ENCODE measurements at regions of chr7 and their contacts with region 1.

Region 1: DNA sequence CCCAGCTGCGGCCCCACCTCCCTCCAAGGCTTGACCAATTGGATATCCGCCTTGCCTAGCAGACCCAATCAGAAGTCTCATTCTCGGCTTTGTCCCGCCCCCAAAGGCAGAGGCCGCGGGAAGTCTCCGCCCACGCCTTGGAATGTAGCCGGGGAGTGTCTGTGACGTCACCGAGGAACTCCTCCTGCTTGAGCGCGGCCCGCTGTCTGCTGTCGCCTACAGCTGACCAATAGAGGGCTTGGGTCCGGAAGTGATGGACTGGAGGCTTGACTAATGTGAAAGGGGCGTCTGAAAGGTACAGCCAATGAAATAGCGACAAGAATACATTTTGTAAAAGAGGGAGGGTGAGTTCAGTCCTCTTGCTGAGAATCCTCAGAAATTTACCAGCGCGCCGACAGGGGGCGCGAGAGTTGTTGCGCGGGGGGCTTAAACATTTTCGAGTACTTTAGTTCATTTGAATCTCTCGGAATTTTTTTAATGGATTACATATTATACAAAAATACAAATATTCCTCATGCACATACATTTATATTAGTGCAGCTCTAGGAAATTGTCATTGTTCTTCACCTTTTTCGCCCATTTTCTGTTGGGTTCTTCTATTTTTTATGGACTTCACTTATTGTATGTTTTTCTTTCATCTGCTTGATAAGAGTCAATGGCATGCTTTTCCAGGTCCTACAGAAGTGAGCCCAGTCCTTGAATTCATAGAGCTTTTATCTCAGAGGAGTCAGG is 376 bp upstream of the CREB3L2 start:
- DNase-seq: peak; percentile 99
- ATAC-seq: peak; percentile 91
- H3K4me3 ChIP-seq: peak overlapping the region; percentile 66 to 99 (median 95)
- H3K4me3 Mint-ChIP-seq: peak overlapping the region; percentile 94
- H3K27ac ChIP-seq: peak overlapping the region; percentile 69 to 84
- H3K27ac Mint-ChIP-seq: peak overlapping the region; percentile 90
- H3K4me1 ChIP-seq: peaks cover 14 to 22% of the 10 kb centered on the region in 2 donors
- H3K4me1 Mint-ChIP-seq: peaks cover 30% of the 10 kb centered on the region
- H3K27me3 ChIP-seq: no peaks in the 10 kb centered on the region
- H3K27me3 Mint-ChIP-seq: no peaks in the 10 kb centered on the region
- CTCF ChIP-seq: peak; percentile 98

Region 2: DNA sequence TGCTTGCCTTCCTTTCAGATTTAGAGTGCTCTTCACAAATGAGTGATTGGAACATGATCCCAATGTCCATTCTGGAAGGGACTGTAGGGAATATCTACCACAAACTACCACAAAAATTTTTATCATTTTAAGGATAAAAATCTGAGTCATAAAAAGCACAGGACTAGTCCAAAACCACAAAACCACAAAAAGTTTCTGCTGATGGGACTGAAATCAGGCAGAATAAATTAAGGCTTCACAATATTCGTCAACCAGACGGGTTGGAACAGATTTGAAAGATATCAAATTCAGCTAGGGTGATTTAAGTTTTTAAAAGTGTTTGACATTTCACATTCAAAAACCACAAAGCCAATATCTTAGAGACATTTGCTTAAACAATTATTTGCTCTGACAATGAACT is 558.6 kb before region 1 on chr7:
- CTCF ChIA-PET with region 1: no interaction called
- POLR2A ChIA-PET with region 1: no interaction called
- intact Hi-C with region 1: no loop called
- DNase-seq: no peak
- ATAC-seq: no peak
- H3K4me3 ChIP-seq: no peak overlapping the region
- H3K4me3 Mint-ChIP-seq: no peak overlapping the region
- H3K27ac ChIP-seq: no peak overlapping the region
- H3K27ac Mint-ChIP-seq: no peak overlapping the region
- H3K4me1 ChIP-seq: no peaks in the 10 kb centered on the region
- H3K4me1 Mint-ChIP-seq: no peaks in the 10 kb centered on the region
- H3K27me3 ChIP-seq: no peaks in the 10 kb centered on the region
- H3K27me3 Mint-ChIP-seq: no peaks in the 10 kb centered on the region
- CTCF ChIP-seq: no peak

Region 3: GRCh38 chr7:137934941-137935883 is 67.0 kb before region 1 on chr7:
- CTCF ChIA-PET with region 1: no interaction called
- POLR2A ChIA-PET with region 1: interaction called, 9 read pairs
- intact Hi-C with region 1: loop called (anchors 1 kb)
- DNase-seq: peak; percentile 51
- ATAC-seq: peak; percentile 41
- H3K4me3 ChIP-seq: peak overlapping the region in 4 of 5 experiments; percentile 40 to 68 (median 54)
- H3K4me3 Mint-ChIP-seq: peak overlapping the region; percentile 85
- H3K27ac ChIP-seq: peak overlapping the region; percentile 54 to 90
- H3K27ac Mint-ChIP-seq: peak overlapping the region; percentile 92
- H3K4me1 ChIP-seq: peaks cover 28 to 30% of the 10 kb centered on the region in 2 donors
- H3K4me1 Mint-ChIP-seq: peaks cover 36% of the 10 kb centered on the region
- H3K27me3 ChIP-seq: no peaks in the 10 kb centered on the region
- H3K27me3 Mint-ChIP-seq: no peaks in the 10 kb centered on the region
- CTCF ChIP-seq: no peak

Region 4: GRCh38 chr7:137985253-137985896 is 16.9 kb before region 1 on chr7:
- CTCF ChIA-PET with region 1: interaction called, 44 read pairs
- POLR2A ChIA-PET with region 1: no interaction called
- intact Hi-C with region 1: loop called (anchors 2 kb)
- DNase-seq: peak; percentile 71
- ATAC-seq: peak; percentile 73
- H3K4me3 ChIP-seq: peak overlapping the region in 1 of 5 experiments; percentile 31
- H3K4me3 Mint-ChIP-seq: peak overlapping the region; percentile 58
- H3K27ac ChIP-seq: peak overlapping the region; percentile 89 to 94
- H3K27ac Mint-ChIP-seq: no peak overlapping the region
- H3K4me1 ChIP-seq: peaks cover 75 to 84% of the 10 kb centered on the region in 2 donors
- H3K4me1 Mint-ChIP-seq: peaks cover 30% of the 10 kb centered on the region
- H3K27me3 ChIP-seq: no peaks in the 10 kb centered on the region
- H3K27me3 Mint-ChIP-seq: no peaks in the 10 kb centered on the region
- CTCF ChIP-seq: no peak

Region 5: GRCh38 chr7:138049505-138050116 is 47.3 kb after region 1 on chr7:
- CTCF ChIA-PET with region 1: no interaction called
- POLR2A ChIA-PET with region 1: no interaction called
- intact Hi-C with region 1: no loop called
- DNase-seq: no peak
- ATAC-seq: no peak
- H3K4me3 ChIP-seq: no peak overlapping the region
- H3K4me3 Mint-ChIP-seq: no peak overlapping the region
- H3K27ac ChIP-seq: no peak overlapping the region
- H3K27ac Mint-ChIP-seq: no peak overlapping the region
- H3K4me1 ChIP-seq: no peaks in the 10 kb centered on the region
- H3K4me1 Mint-ChIP-seq: no peaks in the 10 kb centered on the region
- H3K27me3 ChIP-seq: no peaks in the 10 kb centered on the region
- H3K27me3 Mint-ChIP-seq: peaks cover 12% of the 10 kb centered on the region
- CTCF ChIP-seq: no peak

Region 6: GRCh38 chr7:138459413-138460175 is 457.3 kb after region 1 on chr7:
- CTCF ChIA-PET with region 1: no interaction called
- POLR2A ChIA-PET with region 1: no interaction called
- intact Hi-C with region 1: loop called (anchors 1 kb)
- DNase-seq: peak; percentile 99
- ATAC-seq: peak; percentile 87
- H3K4me3 ChIP-seq: peak overlapping the region; percentile 40 to 73 (median 62)
- H3K4me3 Mint-ChIP-seq: peak overlapping the region; percentile 91
- H3K27ac ChIP-seq: peak overlapping the region in 1 of 2 donors; percentile 56
- H3K27ac Mint-ChIP-seq: peak overlapping the region; percentile 94
- H3K4me1 ChIP-seq: peaks cover 9 to 14% of the 10 kb centered on the region in 2 donors
- H3K4me1 Mint-ChIP-seq: peaks cover 19% of the 10 kb centered on the region
- H3K27me3 ChIP-seq: no peaks in the 10 kb centered on the region
- H3K27me3 Mint-ChIP-seq: peaks cover 3% of the 10 kb centered on the region
- CTCF ChIP-seq: no peak

Region 7: DNA sequence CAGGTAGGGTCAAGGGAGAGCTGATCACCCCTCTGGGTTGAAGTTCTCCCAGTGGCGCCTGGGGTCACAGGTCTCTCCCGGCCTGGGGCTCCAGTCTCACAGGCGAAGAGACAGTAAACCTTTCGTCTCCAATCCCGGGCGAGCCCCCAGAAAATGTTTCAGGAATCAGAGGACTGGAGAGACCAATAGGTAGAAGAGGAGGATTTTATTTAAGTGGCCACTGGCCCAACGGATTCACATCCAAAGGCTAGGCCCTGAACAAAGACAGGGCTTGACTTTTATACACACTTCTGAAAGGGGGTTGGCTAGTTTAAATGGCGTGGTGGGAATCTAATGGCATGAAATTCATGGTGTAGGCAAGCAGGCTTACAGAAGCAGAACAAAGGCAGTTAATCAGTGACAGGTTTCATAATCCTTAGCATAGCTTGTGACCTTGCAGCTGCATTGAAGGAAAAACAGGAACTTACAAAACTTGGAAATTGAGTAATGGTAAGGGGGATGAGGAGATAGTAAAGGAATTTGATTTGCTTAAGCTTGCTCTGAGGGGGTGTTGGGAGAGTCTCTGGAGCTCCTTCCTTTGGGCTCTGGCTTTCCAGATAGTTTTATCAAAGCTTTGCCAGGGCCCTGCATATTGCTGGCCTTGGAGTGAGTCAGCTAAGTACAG is 563.3 kb after region 1 on chr7:
- CTCF ChIA-PET with region 1: no interaction called
- POLR2A ChIA-PET with region 1: no interaction called
- intact Hi-C with region 1: no loop called
- DNase-seq: no peak
- ATAC-seq: no peak
- H3K4me3 ChIP-seq: no peak overlapping the region
- H3K4me3 Mint-ChIP-seq: no peak overlapping the region
- H3K27ac ChIP-seq: no peak overlapping the region
- H3K27ac Mint-ChIP-seq: no peak overlapping the region
- H3K4me1 ChIP-seq: no peaks in the 10 kb centered on the region
- H3K4me1 Mint-ChIP-seq: no peaks in the 10 kb centered on the region
- H3K27me3 ChIP-seq: no peaks in the 10 kb centered on the region
- H3K27me3 Mint-ChIP-seq: no peaks in the 10 kb centered on the region
- CTCF ChIP-seq: no peak

Region 8: GRCh38 chr7:139359366-139360209 is 1357.3 kb after region 1 on chr7 and contains the start of gene LUC7L2:
- CTCF ChIA-PET with region 1: no interaction called
- POLR2A ChIA-PET with region 1: no interaction called
- intact Hi-C with region 1: loop called (anchors 5 kb)
- DNase-seq: peak; percentile 99
- ATAC-seq: peak; percentile 77
- H3K4me3 ChIP-seq: peak within 1 kb of the TSS; percentile 91 to 96 (median 96)
- H3K4me3 Mint-ChIP-seq: peak within 1 kb of the TSS; percentile 99
- H3K27ac ChIP-seq: peak within 1 kb of the TSS; percentile 98 to 99
- H3K27ac Mint-ChIP-seq: peak within 1 kb of the TSS; percentile 100
- H3K4me1 ChIP-seq: peaks cover 7 to 24% of the 10 kb centered on the region in 2 donors
- H3K4me1 Mint-ChIP-seq: peaks cover 39% of the 10 kb centered on the region
- H3K27me3 ChIP-seq: no peaks in the 10 kb centered on the region
- H3K27me3 Mint-ChIP-seq: no peaks in the 10 kb centered on the region
- CTCF ChIP-seq: no peak
- total RNA-seq, gene LUC7L2: 141 and 142 TPM in 2 replicates

Measured in B cell (primary cell).